Naive thymus-derived CD4-positive, alpha-beta T cell (primary cell): ENCODE measurements at regions of chr11 and their contacts with region 1.

Region 1: GRCh38 chr11:86138958-86139357 is 70.1 kb upstream of the PICALM start:
- DNase-seq: peak in 1 of 9 donors; percentile 4
- ATAC-seq: peak; percentile 65
- H3K4me3 ChIP-seq: peak overlapping the region; percentile 5
- H3K4me3 Mint-ChIP-seq: peak overlapping the region in 9 of 10 donors; percentile 37 to 76 (median 45)
- H3K27ac ChIP-seq: no peak overlapping the region
- H3K27ac Mint-ChIP-seq: peak overlapping the region; percentile 7 to 87 (median 76)
- H3K4me1 ChIP-seq: peaks cover 4 to 30% of the 10 kb centered on the region in 2 donors
- H3K4me1 Mint-ChIP-seq: peaks cover 11 to 66% (median 16%) of the 10 kb centered on the region in 7 donors
- H3K27me3 ChIP-seq: no peaks in the 10 kb centered on the region
- H3K27me3 Mint-ChIP-seq: no peaks in the 10 kb centered on the region

Region 2: DNA sequence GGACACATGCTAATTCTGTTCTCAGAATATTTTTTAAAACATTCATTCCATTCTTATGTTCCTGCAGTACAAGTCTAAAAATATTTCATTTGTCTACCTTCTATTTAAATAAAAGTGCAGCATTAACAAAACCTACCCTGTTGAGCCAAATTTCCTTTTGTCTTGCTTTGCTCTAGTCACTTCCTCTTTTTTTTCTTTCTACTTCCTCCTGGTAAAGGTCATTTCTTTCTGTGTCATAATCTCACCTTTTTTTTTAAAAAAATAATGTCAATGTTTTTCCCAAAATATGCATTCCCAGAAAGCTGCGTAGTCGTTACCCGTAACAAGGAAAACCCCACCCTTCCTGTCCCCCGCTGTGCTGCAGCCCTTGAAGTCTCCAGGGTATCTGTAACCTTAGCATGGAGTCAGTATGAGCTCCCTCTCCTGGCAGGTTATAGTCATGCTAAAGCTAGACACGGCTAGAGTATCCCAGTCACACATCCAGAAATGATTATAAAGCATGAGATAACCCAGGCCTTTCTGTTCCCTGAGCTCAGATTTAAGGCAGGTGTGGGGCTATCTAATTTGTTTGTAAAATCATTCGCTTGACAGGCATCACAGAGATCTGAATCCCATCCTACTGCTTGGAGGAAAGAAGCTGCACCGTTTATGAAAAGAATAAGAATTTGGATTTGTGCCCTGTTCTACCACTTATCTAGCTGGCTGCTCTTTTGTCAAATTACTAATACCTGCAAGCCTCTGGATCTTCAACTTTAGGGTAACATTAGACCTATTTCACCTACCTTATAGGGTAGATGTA is 54.5 kb after region 1 on chr11:
- CTCF ChIA-PET with region 1: no interaction called
- POLR2A ChIA-PET with region 1: no interaction called
- intact Hi-C with region 1: loop called in 1 of 2 experiments (anchors 5 kb)
- DNase-seq: peak; percentile 9 to 70 (median 65)
- ATAC-seq: peak; percentile 99
- H3K4me3 ChIP-seq: peak overlapping the region; percentile 36
- H3K4me3 Mint-ChIP-seq: peak overlapping the region; percentile 71 to 94 (median 88)
- H3K27ac ChIP-seq: no peak overlapping the region
- H3K27ac Mint-ChIP-seq: peak overlapping the region; percentile 21 to 91 (median 67)
- H3K4me1 ChIP-seq: peaks cover 5 to 7% of the 10 kb centered on the region in 2 donors
- H3K4me1 Mint-ChIP-seq: peaks cover 13 to 24% (median 15%) of the 10 kb centered on the region in 7 donors
- H3K27me3 ChIP-seq: no peaks in the 10 kb centered on the region
- H3K27me3 Mint-ChIP-seq: peaks cover 0 to 10% (median 3%) of the 10 kb centered on the region in 5 donors

Region 3: DNA sequence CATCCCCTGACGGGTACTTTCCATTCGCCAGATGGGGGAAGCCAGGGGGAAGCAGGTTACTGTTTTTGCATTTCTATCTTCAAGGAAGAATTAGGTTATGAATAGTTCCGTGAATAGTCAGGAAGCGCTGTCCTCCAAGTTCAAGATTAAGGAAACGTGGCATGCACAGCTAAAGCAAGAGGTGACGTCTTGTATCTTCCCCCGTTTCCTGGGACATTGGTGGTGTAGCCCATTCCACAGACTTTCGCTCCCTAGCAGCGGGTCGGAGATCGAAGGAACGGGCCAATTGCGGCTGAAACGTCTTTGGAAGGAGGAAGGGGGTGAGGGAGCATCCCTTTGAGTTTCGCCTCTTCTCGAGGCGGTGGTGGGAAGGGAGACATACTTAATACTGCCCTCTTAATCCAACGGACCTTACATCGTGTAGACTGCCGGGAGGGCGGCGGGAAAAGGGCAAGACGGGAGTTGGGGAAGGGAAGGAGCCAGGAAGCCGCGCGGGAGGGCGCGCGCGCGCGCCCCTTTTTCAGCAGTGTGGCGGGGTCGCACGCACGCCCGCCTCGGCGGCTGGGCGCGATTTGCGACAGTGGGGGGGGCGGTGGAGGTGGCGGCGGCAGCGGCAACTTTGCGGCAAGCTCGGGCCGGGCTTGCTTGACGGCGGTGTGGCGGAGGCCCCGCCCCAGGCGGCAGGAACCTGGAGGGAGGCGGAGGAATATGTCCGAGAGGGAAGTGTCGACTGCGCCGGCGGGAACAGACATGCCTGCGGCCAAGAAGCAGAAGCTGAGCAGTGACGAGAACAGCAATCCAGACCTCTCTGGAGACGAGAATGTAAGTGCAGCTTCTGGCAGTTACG is 105.8 kb after region 1 on chr11 and contains the start of gene EED:
- CTCF ChIA-PET with region 1: no interaction called
- POLR2A ChIA-PET with region 1: no interaction called
- intact Hi-C with region 1: no loop called
- DNase-seq: peak; percentile 88 to 94 (median 92)
- ATAC-seq: peak; percentile 94
- H3K4me3 ChIP-seq: peak within 1 kb of the TSS; percentile 100
- H3K4me3 Mint-ChIP-seq: no peak within 1 kb of the TSS
- H3K27ac ChIP-seq: peak within 1 kb of the TSS; percentile 97
- H3K27ac Mint-ChIP-seq: no peak within 1 kb of the TSS
- H3K4me1 ChIP-seq: peaks cover 32 to 33% of the 10 kb centered on the region in 2 donors
- H3K4me1 Mint-ChIP-seq: peaks cover 0 to 34% (median 1%) of the 10 kb centered on the region in 7 donors
- H3K27me3 ChIP-seq: no peaks in the 10 kb centered on the region
- H3K27me3 Mint-ChIP-seq: peaks cover 0 to 5% (median 0%) of the 10 kb centered on the region in 5 donors
- total RNA-seq, gene EED: 22.2 to 62.4 (median 35.5) TPM

Region 4: GRCh38 chr11:86483940-86484794 is 345.2 kb after region 1 on chr11:
- CTCF ChIA-PET with region 1: no interaction called
- POLR2A ChIA-PET with region 1: no interaction called
- intact Hi-C with region 1: no loop called
- DNase-seq: no peak
- ATAC-seq: no peak
- H3K4me3 ChIP-seq: no peak overlapping the region
- H3K4me3 Mint-ChIP-seq: no peak overlapping the region
- H3K27ac ChIP-seq: no peak overlapping the region
- H3K27ac Mint-ChIP-seq: no peak overlapping the region
- H3K4me1 ChIP-seq: peaks cover 0 to 17% of the 10 kb centered on the region in 2 donors
- H3K4me1 Mint-ChIP-seq: peaks cover 0 to 13% (median 0%) of the 10 kb centered on the region in 7 donors
- H3K27me3 ChIP-seq: no peaks in the 10 kb centered on the region
- H3K27me3 Mint-ChIP-seq: peaks cover 0 to 3% (median 0%) of the 10 kb centered on the region in 5 donors